ENCODE measurements at regions of chr15 and their contacts with region 1.

Region 1: GRCh38 chr15:20340931-20341661 is 200.5 kb downstream of the GOLGA6L6 start:
- DNase-seq: peak; percentile 56 to 87
- H3K4me3 ChIP-seq: no peak overlapping the region
- H3K27ac ChIP-seq: no peak overlapping the region
- H3K4me1 ChIP-seq: no peaks in the 10 kb centered on the region
- H3K27me3 ChIP-seq: no peaks in the 10 kb centered on the region
- CTCF ChIP-seq: no peak

Region 2: DNA sequence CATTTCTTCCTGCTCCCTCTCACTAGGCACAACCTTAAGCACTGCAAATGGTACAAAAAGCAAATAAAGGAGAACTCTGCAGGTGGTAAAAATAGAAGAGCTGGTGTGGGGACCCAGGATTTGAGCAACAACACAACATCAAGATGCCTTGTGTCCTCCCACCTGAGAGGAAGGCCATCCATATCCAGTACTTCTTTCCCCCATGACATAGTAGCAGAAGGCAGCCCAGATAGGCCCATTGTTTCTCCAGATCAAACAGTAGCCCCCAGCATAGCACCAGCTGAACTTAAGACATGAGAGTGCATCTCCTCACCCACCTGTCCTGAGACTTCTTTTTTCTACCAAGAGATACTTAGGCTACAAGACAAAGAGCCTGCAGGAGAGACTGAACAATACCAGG is 20.0 kb after region 1 on chr15:
- intact Hi-C with region 1: no loop called
- DNase-seq: no peak
- H3K4me3 ChIP-seq: no peak overlapping the region
- H3K27ac ChIP-seq: no peak overlapping the region
- H3K4me1 ChIP-seq: peaks cover 0 to 5% (median 0%) of the 10 kb centered on the region in 4 donors
- H3K27me3 ChIP-seq: peaks cover 0 to 10% of the 10 kb centered on the region in 2 donors
- CTCF ChIP-seq: no peak

Region 3: GRCh38 chr15:20409247-20409646 is 68.2 kb after region 1 on chr15:
- intact Hi-C with region 1: loop called (anchors 10 kb)
- DNase-seq: no peak
- H3K4me3 ChIP-seq: no peak overlapping the region
- H3K27ac ChIP-seq: no peak overlapping the region
- H3K4me1 ChIP-seq: no peaks in the 10 kb centered on the region
- H3K27me3 ChIP-seq: no peaks in the 10 kb centered on the region
- CTCF ChIP-seq: no peak

Measured in tibial artery (tissue), 4 donors.